ENCODE measurements at regions of chr18 and their contacts with region 1.

Region 1: DNA sequence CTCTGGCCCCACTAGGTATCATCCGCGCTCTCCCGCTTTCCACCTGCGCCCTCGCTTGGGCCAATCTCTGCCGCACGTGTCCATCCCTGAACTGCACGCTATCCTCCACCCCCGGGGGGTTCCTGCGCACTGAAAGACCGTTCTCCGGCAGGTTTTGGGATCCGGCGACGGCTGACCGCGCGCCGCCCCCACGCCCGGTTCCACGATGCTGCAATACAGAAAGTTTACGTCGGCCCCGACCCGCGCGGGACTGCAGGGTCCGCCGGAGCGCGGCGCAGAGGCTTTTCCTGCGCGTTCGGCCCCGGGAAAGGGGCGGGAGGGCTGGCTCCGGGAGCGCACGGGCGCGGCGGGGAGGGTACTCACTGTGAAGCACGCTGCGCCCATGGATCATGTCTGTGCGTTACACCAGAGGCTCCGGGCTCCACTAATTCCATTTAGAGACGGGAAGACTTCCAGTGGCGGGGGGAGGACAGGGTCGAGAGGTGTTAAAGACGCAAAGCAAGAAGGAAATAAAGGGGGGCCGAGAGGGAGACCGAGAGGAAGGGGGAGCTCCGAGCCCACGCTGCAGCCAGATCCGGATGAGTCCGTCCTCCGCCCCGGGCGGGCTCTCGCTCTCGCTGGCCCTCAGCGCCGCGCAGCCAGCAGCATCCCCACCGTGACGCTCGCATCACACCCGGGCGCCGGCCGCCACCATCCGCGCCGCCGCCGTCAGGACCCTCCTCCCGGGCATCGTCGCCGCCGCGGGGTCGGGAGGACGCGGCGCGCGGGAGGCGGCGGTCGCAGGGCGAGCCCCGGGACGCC is 686 bp downstream of the NETO1 start:
- DNase-seq: peak; percentile 24
- ATAC-seq: peak; percentile 46
- H3K4me3 Mint-ChIP-seq: peak overlapping the region; percentile 84
- H3K27ac Mint-ChIP-seq: peak overlapping the region; percentile 57
- H3K4me1 Mint-ChIP-seq: peaks cover 17% of the 10 kb centered on the region
- H3K27me3 Mint-ChIP-seq: peaks cover 8% of the 10 kb centered on the region
- CTCF ChIP-seq: no peak

Region 2: DNA sequence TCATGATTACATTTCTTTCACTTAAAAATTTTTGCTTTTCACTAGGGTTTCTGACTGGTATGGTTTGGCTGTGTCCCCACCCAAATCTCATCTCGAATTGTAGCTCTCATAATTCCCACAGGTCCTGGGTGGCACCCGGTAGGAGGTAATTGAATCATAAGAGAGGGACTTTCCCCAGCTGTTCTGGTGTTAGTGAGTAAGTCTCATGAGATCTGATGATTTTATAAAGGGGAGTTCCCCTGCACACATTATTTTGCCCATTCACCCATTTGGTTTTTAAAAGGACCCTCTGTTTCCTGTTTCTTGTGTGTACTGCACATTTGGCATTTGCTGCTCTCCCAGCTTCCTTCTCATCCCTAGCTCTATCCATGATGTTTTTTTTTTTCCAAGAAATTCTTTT is 28.4 kb after region 1 on chr18:
- CTCF ChIA-PET with region 1: no interaction called
- POLR2A ChIA-PET with region 1: interaction called, 3 read pairs
- intact Hi-C with region 1: loop called (anchors 1 kb)
- DNase-seq: no peak
- ATAC-seq: peak; percentile 96
- H3K4me3 Mint-ChIP-seq: no peak overlapping the region
- H3K27ac Mint-ChIP-seq: peak overlapping the region; percentile 63
- H3K4me1 Mint-ChIP-seq: peaks cover 8% of the 10 kb centered on the region
- H3K27me3 Mint-ChIP-seq: no peaks in the 10 kb centered on the region
- CTCF ChIP-seq: no peak

Region 3: DNA sequence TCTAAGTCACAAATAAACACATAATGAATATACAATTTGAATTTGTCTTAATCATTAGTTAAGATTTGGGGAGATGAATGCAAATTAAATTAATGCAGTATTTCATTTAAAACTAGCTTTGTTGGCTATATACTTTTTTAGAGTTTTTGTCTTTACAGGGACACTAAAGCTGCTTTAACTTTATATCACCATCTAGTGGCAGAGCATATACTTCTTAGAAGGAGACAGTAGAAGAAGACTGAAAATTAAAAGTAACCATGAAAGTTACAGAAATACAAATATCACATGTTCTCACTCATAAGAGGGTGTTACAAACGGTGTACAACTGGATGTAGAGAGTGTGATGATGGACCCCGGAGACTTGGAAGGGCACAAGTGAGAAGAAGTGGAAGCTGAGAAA is 269.0 kb after region 1 on chr18:
- CTCF ChIA-PET with region 1: interaction called, 6 read pairs
- POLR2A ChIA-PET with region 1: no interaction called
- intact Hi-C with region 1: loop called (anchors 1 kb)
- DNase-seq: no peak
- ATAC-seq: no peak
- H3K4me3 Mint-ChIP-seq: no peak overlapping the region
- H3K27ac Mint-ChIP-seq: no peak overlapping the region
- H3K4me1 Mint-ChIP-seq: peaks cover 9% of the 10 kb centered on the region
- H3K27me3 Mint-ChIP-seq: no peaks in the 10 kb centered on the region
- CTCF ChIP-seq: no peak

Region 4: DNA sequence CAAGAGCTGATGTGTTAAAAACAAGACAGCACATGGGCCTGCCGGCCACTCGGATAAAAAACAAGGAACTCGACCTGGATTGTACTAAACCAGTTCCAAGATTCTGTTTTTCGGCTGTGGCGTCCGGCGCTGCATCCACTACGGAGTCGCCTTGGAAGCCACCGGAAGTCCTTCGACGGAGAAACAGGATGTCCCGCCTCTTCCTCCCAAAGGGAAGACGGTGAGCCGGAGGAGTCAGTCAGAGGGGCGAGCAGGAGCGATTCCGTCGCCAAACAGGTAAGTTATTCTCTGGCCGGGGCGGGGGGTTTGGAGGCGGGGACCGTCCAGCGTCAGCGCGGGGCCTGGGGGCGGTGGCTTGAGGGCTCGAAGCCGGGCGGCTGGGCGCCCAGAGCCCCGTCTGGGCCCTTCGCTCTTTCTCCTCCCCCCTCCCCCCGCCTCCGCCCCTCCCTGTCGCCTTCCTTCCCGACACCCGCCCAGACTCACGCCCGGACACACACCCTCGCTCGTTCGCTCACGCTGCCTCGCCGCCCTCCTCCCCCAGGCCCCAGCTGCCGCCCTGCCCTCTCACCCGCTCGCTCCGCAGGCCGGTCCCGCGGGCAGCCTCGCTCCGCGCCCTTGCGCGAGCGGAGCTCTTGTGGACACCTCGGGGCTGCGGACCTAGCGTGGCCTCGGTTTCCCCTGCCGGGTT is 1730.7 kb after region 1 on chr18 and contains the start of gene ZNF407:
- CTCF ChIA-PET with region 1: no interaction called
- POLR2A ChIA-PET with region 1: no interaction called
- intact Hi-C with region 1: loop called (anchors 10 kb)
- DNase-seq: peak; percentile 85
- ATAC-seq: peak; percentile 84
- H3K4me3 Mint-ChIP-seq: peak within 1 kb of the TSS; percentile 96
- H3K27ac Mint-ChIP-seq: peak within 1 kb of the TSS; percentile 98
- H3K4me1 Mint-ChIP-seq: peaks cover 49% of the 10 kb centered on the region
- H3K27me3 Mint-ChIP-seq: no peaks in the 10 kb centered on the region
- CTCF ChIP-seq: no peak
- total RNA-seq, gene ZNF407: 24.0 and 26.7 TPM in 2 replicates